ENCODE measurements at regions of chr20 and their contacts with region 1.

Region 1: GRCh38 chr20:33810885-33811777 is at the start of gene CHMP4B:
- DNase-seq: peak; percentile 99
- H3K4me3 Mint-ChIP-seq: peak within 1 kb of the TSS; percentile 94
- H3K27ac Mint-ChIP-seq: peak within 1 kb of the TSS; percentile 97
- H3K4me1 Mint-ChIP-seq: peaks cover 47% of the 10 kb centered on the region
- H3K27me3 Mint-ChIP-seq: no peaks in the 10 kb centered on the region
- total RNA-seq, gene CHMP4B: 94.5 and 96.4 TPM in 2 replicates

Region 2: GRCh38 chr20:33443512-33444239 is 367.5 kb before region 1 on chr20 and contains the start of gene SNTA1:
- intact Hi-C with region 1: loop called (anchors 5 kb)
- DNase-seq: peak; percentile 82
- H3K4me3 Mint-ChIP-seq: peak within 1 kb of the TSS; percentile 88
- H3K27ac Mint-ChIP-seq: peak within 1 kb of the TSS; percentile 76
- H3K4me1 Mint-ChIP-seq: peaks cover 10% of the 10 kb centered on the region
- H3K27me3 Mint-ChIP-seq: peaks cover 11% of the 10 kb centered on the region
- total RNA-seq, gene SNTA1: 0.76 and 0.91 TPM in 2 replicates

Region 3: GRCh38 chr20:33554914-33555420 is 256.2 kb before region 1 on chr20:
- intact Hi-C with region 1: loop called (anchors 2 kb)
- DNase-seq: peak; percentile 47
- H3K4me3 Mint-ChIP-seq: peak overlapping the region; percentile 20
- H3K27ac Mint-ChIP-seq: peak overlapping the region; percentile 85
- H3K4me1 Mint-ChIP-seq: peaks cover 15% of the 10 kb centered on the region
- H3K27me3 Mint-ChIP-seq: no peaks in the 10 kb centered on the region

Region 4: DNA sequence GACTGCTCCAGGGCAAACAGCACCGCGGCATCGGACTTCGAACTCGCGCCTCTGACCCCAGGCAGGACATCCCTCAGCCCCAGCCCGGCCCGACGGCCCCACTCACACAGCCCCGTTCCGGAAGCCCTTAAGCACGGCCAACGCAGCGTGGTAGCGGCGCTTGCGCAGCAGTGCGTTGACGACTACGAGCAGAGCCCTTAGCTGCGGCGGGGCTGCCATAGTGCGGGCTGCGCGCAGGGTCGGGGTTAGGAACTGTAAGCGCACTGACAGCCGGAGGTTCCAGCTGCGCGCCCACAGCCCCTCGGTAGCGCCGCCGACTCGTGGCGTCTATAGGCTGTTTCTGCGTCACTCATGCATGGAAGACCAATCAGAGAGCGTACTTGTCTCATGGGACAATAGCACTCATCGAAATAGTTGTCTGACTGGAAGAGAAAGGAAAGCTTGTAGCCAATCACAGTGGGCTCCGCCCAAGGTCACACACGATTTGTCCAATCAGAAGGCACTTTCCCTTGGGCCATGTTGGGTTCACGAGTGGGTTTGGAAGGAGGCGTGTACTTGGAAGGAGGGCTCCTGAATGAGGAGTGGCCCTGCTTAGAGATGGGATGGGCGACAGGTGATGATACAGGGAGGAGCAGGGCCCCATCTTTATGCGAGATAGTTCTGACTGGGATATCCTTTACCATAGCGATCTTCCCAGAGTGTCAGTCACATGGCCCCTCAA is 91.0 kb before region 1 on chr20 and contains the start of gene PXMP4:
- intact Hi-C with region 1: loop called (anchors 1 kb)
- DNase-seq: peak; percentile 88
- H3K4me3 Mint-ChIP-seq: peak within 1 kb of the TSS; percentile 85
- H3K27ac Mint-ChIP-seq: peak within 1 kb of the TSS; percentile 93
- H3K4me1 Mint-ChIP-seq: peaks cover 30% of the 10 kb centered on the region
- H3K27me3 Mint-ChIP-seq: no peaks in the 10 kb centered on the region
- total RNA-seq, gene PXMP4: 7.3 and 7.9 TPM in 2 replicates

Region 5: GRCh38 chr20:33766686-33767432 is 44.3 kb before region 1 on chr20:
- intact Hi-C with region 1: no loop called
- DNase-seq: no peak
- H3K4me3 Mint-ChIP-seq: no peak overlapping the region
- H3K27ac Mint-ChIP-seq: no peak overlapping the region
- H3K4me1 Mint-ChIP-seq: no peaks in the 10 kb centered on the region
- H3K27me3 Mint-ChIP-seq: no peaks in the 10 kb centered on the region

Region 6: GRCh38 chr20:33777816-33778215 is 33.3 kb before region 1 on chr20:
- intact Hi-C with region 1: loop called (anchors 1 kb)
- DNase-seq: no peak
- H3K4me3 Mint-ChIP-seq: no peak overlapping the region
- H3K27ac Mint-ChIP-seq: peak overlapping the region; percentile 90
- H3K4me1 Mint-ChIP-seq: peaks cover 47% of the 10 kb centered on the region
- H3K27me3 Mint-ChIP-seq: no peaks in the 10 kb centered on the region

Region 7: GRCh38 chr20:34302723-34303528 is 491.8 kb after region 1 on chr20 and contains the start of gene AHCY:
- intact Hi-C with region 1: loop called (anchors 5 kb)
- DNase-seq: peak; percentile 93
- H3K4me3 Mint-ChIP-seq: peak within 1 kb of the TSS; percentile 83
- H3K27ac Mint-ChIP-seq: peak within 1 kb of the TSS; percentile 92
- H3K4me1 Mint-ChIP-seq: peaks cover 19% of the 10 kb centered on the region
- H3K27me3 Mint-ChIP-seq: no peaks in the 10 kb centered on the region
- total RNA-seq, gene AHCY: 130 and 132 TPM in 2 replicates